ENCODE measurements at regions of chr13 and their contacts with region 1.

Region 1: GRCh38 chr13:30792285-30793000 is 57.1 kb downstream of the ALOX5AP start:
- DNase-seq: peak; percentile 69
- H3K4me3 ChIP-seq: no peak overlapping the region
- CTCF ChIP-seq: peak; percentile 68

Region 2: GRCh38 chr13:30676672-30677071 is 115.8 kb before region 1 on chr13:
- CTCF ChIA-PET with region 1: interaction called, 11 read pairs
- POLR2A ChIA-PET with region 1: no interaction called
- DNase-seq: no peak
- H3K4me3 ChIP-seq: no peak overlapping the region
- CTCF ChIP-seq: peak; percentile 44